Panc1 (cell line): ENCODE measurements at regions of chr1 and their contacts with region 1.

Region 1: DNA sequence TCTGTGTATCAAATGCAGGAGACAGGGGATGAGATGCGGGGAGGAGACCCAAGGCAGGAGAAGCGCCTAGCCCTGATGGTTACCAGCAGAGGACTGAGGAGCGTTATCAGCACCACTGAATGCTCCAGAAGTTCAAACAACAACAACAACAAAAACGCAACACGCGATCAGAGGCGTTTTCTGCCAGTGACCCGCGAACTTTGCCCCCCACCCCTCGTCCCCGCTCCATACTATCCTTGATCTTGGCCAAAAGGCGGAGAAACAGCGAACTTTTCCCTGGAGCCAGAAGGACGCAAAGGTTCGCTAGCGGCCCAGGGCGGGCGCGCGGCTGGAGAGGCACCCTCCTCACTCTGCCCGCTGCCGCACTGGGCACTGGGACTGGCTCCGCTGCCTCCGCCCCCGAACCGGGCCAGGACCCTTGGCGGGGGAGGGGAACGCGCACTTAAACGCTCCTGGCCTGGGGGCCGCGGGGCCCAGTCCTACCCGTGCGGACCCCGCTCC is 699 bp downstream of the ECHDC2 start:
- DNase-seq: no peak
- ATAC-seq: peak; percentile 81
- H3K4me3 ChIP-seq: peak overlapping the region; percentile 62 to 81
- H3K27ac ChIP-seq: peak overlapping the region; percentile 74
- H3K4me1 ChIP-seq: peaks cover 9% of the 10 kb centered on the region
- H3K27me3 ChIP-seq: no peaks in the 10 kb centered on the region
- CTCF ChIP-seq: no peak

Region 2: GRCh38 chr1:52713590-52713989 is 207.3 kb before region 1 on chr1:
- CTCF ChIA-PET with region 1: no interaction called
- POLR2A ChIA-PET with region 1: no interaction called
- in situ Hi-C with region 1: no loop called
- intact Hi-C with region 1: no loop called
- DNase-seq: no peak
- ATAC-seq: no peak
- H3K4me3 ChIP-seq: no peak overlapping the region
- H3K27ac ChIP-seq: no peak overlapping the region
- H3K4me1 ChIP-seq: no peaks in the 10 kb centered on the region; the same call in 1 of the 2 replicates
- H3K27me3 ChIP-seq: no peaks in the 10 kb centered on the region
- CTCF ChIP-seq: no peak

Region 3: GRCh38 chr1:52867087-52867863 is 53.6 kb before region 1 on chr1:
- CTCF ChIA-PET with region 1: interaction called, 12 read pairs
- POLR2A ChIA-PET with region 1: no interaction called
- in situ Hi-C with region 1: no loop called
- intact Hi-C with region 1: no loop called
- DNase-seq: no peak
- ATAC-seq: no peak
- H3K4me3 ChIP-seq: no peak overlapping the region
- H3K27ac ChIP-seq: no peak overlapping the region
- H3K4me1 ChIP-seq: no peaks in the 10 kb centered on the region
- H3K27me3 ChIP-seq: no peaks in the 10 kb centered on the region
- CTCF ChIP-seq: no peak

Region 4: GRCh38 chr1:52955129-52955970 is 34.5 kb after region 1 on chr1:
- CTCF ChIA-PET with region 1: interaction called, 11 read pairs
- POLR2A ChIA-PET with region 1: no interaction called
- in situ Hi-C with region 1: no loop called
- intact Hi-C with region 1: no loop called
- DNase-seq: no peak
- ATAC-seq: no peak
- H3K4me3 ChIP-seq: no peak overlapping the region
- H3K27ac ChIP-seq: no peak overlapping the region
- H3K4me1 ChIP-seq: no peaks in the 10 kb centered on the region
- H3K27me3 ChIP-seq: no peaks in the 10 kb centered on the region
- CTCF ChIP-seq: no peak

Region 5: DNA sequence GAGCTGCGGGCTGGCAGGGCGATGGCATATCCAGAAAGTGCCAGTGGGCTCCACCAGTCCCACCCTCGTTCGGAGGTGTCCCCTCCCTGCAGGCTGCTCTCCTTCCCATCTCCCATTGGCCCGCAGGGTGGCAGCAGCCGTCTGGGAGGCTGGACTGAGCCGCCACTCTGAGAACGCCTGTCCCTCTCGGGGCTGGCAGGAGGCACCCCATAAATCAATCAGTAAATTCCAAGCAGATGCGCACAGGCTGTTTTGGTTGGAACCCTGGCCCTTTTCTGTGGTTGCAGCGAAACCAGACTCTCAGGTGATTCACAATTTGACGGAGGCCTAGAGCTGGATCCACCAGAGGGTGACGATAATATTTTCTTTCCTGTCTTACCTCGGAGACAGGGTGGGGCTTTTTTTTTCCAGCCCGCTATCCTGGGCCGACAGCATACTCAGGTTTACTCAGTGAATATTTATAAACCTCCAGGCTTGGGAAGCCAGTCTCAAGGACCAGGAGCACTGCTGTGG is 718.5 kb after region 1 on chr1:
- CTCF ChIA-PET with region 1: no interaction called
- POLR2A ChIA-PET with region 1: no interaction called
- in situ Hi-C with region 1: no loop called
- intact Hi-C with region 1: no loop called
- DNase-seq: no peak
- ATAC-seq: peak; percentile 32; the same call in 1 of the 2 replicates
- H3K4me3 ChIP-seq: no peak overlapping the region
- H3K27ac ChIP-seq: no peak overlapping the region
- H3K4me1 ChIP-seq: no peaks in the 10 kb centered on the region
- H3K27me3 ChIP-seq: no peaks in the 10 kb centered on the region
- CTCF ChIP-seq: no peak